MCF 10A (cell line): ENCODE measurements at regions of chr1 and their contacts with region 1.

Region 1: GRCh38 chr1:162035241-162035640 is 11.6 kb upstream of the OLFML2B start:
- DNase-seq: peak; percentile 89
- H3K4me3 Mint-ChIP-seq: no peak overlapping the region
- H3K27ac Mint-ChIP-seq: no peak overlapping the region
- H3K4me1 Mint-ChIP-seq: peaks cover under 1% of the 10 kb centered on the region
- H3K27me3 Mint-ChIP-seq: peaks cover 11% of the 10 kb centered on the region
- CTCF ChIP-seq: no peak

Region 2: DNA sequence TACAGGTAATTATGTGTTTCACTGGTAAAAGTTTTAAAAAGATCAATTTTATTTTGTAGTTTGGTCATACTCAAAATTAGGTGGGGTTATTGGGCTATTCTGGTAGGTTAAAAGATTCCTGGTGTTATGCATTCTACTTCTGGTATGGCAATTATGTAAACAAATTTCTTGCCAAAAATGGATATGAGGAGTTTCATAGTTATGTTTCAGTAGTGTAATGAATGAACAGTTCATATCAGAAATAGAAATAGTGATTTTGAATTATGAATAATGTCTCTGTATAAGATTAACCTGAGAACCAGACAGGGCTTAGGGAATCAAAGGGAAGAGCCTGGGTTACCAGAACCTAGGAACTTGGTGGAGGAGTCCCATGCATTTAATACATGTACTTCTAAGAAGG is 253.2 kb before region 1 on chr1:
- CTCF ChIA-PET with region 1: interaction called, 27 read pairs
- POLR2A ChIA-PET with region 1: interaction called, 3 read pairs
- intact Hi-C with region 1: no loop called
- DNase-seq: no peak
- H3K4me3 Mint-ChIP-seq: no peak overlapping the region
- H3K27ac Mint-ChIP-seq: peak overlapping the region; percentile 3
- H3K4me1 Mint-ChIP-seq: no peaks in the 10 kb centered on the region
- H3K27me3 Mint-ChIP-seq: no peaks in the 10 kb centered on the region
- CTCF ChIP-seq: no peak

Region 3: DNA sequence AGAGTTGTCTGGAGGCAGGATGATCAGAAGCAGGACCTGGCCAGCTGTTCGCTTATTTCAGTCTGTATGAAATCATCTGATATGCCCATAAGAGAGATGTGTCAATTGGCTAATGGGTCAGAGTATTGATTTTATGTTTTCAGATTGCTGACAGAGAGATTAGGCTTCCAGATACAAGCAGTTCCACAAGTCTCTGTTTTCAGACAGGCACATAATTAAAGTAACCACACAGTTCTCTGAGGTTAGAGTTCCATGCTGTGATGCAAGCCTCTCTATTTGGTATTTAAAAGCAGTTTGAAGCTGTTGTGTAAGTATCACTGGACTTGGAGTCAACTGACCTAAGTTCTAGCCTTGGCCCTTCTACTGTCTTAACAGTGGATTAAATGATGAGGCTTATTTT is 219.0 kb before region 1 on chr1:
- CTCF ChIA-PET with region 1: interaction called, 16 read pairs
- POLR2A ChIA-PET with region 1: no interaction called
- intact Hi-C with region 1: no loop called
- DNase-seq: no peak
- H3K4me3 Mint-ChIP-seq: no peak overlapping the region
- H3K27ac Mint-ChIP-seq: no peak overlapping the region
- H3K4me1 Mint-ChIP-seq: no peaks in the 10 kb centered on the region
- H3K27me3 Mint-ChIP-seq: no peaks in the 10 kb centered on the region
- CTCF ChIP-seq: no peak

Region 4: DNA sequence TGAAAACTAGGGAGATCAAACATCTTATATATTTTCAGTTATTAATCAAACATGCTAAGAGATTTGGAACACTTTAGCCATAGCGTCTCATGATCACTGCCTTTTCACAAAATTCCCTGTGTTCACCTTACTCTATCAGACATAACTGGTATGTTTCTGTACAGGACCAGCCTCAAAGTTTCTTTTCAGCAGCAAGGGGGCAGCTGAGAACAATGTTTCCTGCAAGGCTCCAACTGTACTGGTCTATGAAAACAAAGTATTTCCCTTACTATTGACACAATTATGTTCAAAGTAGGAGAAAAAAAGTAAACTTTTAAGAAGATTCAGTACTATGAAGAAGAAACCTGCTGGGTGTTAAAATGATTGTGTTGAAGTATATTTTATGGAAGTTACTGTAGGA is 170.7 kb before region 1 on chr1:
- CTCF ChIA-PET with region 1: interaction called, 33 read pairs
- POLR2A ChIA-PET with region 1: no interaction called
- intact Hi-C with region 1: no loop called
- DNase-seq: peak; percentile 38
- H3K4me3 Mint-ChIP-seq: no peak overlapping the region
- H3K27ac Mint-ChIP-seq: no peak overlapping the region
- H3K4me1 Mint-ChIP-seq: no peaks in the 10 kb centered on the region
- H3K27me3 Mint-ChIP-seq: no peaks in the 10 kb centered on the region
- CTCF ChIP-seq: peak; percentile 14

Region 5: DNA sequence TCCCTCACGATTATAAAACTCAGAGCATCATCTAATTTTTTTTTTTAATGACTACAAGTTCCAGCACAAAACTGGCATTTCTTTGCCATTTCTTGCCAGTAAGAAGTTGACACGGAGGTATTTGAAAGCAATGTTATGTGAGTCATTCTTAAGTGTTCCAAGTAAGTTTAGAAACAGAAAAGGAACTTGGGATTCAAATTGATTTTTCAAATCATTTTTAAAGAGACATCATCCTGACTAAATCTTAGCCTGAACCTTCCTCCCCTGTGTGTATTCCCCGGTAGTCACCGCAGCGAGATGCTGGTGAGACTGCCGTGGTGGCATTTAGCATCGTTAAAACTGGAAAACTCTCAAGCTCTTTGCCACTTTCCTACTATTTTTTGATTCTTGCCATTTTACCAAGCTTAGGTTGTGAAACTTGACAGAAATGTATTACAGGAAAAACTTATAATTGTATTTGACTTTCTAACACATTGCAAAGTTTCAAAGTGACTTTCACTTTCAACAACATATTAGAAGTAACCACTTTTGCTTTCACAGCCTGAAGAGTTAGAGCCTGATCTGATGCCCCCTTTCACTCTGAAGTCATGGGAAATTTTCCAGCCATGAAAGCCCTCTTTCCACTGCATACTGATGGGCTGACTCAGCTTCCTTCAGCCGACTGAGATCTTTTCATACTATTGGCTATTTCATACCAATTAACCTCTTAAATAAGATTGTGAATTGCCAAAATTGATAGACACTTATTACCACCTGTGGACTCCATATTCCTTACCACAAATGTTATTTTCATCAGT is 73.0 kb before region 1 on chr1:
- CTCF ChIA-PET with region 1: interaction called, 11 read pairs
- POLR2A ChIA-PET with region 1: no interaction called
- intact Hi-C with region 1: no loop called
- DNase-seq: peak; percentile 71
- H3K4me3 Mint-ChIP-seq: peak overlapping the region; percentile 69
- H3K27ac Mint-ChIP-seq: peak overlapping the region; percentile 40
- H3K4me1 Mint-ChIP-seq: peaks cover 33% of the 10 kb centered on the region
- H3K27me3 Mint-ChIP-seq: no peaks in the 10 kb centered on the region
- CTCF ChIP-seq: no peak

Region 6: DNA sequence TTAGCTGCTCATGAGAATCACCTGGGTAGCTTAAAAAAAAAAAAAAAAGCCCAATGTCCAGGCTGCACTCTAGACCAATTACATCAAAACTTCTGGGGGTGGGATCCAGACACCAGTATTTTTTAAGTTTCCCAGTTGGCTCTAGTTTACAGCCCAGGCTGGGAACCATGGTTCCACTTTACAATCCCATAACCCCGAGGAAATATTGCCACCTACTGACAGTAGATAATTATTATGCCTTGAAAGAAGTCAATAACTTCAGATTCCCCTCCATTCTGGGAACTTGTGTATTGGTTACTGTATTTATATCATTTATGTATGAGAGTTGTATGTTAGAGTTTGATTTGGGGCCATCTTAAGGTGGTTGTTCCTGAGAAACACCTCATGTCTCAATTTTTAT is 241.3 kb after region 1 on chr1:
- CTCF ChIA-PET with region 1: interaction called, 30 read pairs
- POLR2A ChIA-PET with region 1: no interaction called
- intact Hi-C with region 1: no loop called
- DNase-seq: peak; percentile 66
- H3K4me3 Mint-ChIP-seq: no peak overlapping the region
- H3K27ac Mint-ChIP-seq: no peak overlapping the region
- H3K4me1 Mint-ChIP-seq: peaks cover 7% of the 10 kb centered on the region
- H3K27me3 Mint-ChIP-seq: no peaks in the 10 kb centered on the region
- CTCF ChIP-seq: peak; percentile 64